ENCODE measurements at regions of chr14 and their contacts with region 1.

Region 1: DNA sequence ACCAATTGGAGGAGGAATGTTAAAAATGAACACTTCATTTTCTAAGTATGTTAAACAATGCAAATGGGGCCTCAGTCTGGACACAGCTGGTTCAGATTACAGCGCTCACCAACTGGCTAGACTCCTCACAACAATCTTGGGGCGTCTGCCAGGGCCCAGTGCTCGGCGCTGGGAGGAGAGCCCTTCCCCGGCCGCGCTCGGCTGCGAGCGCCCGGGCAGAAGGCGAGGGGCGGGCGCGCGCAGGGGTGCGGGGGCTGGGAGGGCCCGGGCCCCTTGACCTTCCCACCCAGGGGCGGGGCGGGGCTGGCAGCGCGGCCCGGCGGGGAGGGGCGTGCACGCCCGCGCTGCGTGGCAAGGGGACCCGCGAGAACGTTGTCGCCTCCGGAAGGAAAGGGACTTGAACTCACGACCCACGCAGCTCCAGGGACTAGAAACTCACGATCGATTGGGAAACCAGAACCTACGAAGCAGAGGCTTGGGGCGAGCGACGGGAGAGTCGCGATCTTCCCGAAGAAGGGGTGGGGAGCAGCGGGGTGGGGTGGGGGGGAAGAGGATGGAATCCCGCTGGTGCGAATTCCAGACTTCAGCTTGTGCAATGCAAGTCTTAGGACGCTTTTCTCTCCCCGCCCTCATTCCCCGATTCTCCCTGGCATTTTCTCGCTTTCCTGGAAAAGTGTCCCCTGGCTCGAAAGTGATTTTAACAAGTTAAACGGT is at the start of gene FBLN5:
- DNase-seq: peak; percentile 83 to 89
- ATAC-seq: peak; percentile 88
- H3K4me3 ChIP-seq: peak within 1 kb of the TSS; percentile 100
- H3K27ac ChIP-seq: peak within 1 kb of the TSS; percentile 71 to 98
- H3K4me1 ChIP-seq: peaks cover 0 to 2% of the 10 kb centered on the region in 2 donors
- H3K27me3 ChIP-seq: no peaks in the 10 kb centered on the region
- total RNA-seq, gene FBLN5: 407 to 431 TPM

Region 2: DNA sequence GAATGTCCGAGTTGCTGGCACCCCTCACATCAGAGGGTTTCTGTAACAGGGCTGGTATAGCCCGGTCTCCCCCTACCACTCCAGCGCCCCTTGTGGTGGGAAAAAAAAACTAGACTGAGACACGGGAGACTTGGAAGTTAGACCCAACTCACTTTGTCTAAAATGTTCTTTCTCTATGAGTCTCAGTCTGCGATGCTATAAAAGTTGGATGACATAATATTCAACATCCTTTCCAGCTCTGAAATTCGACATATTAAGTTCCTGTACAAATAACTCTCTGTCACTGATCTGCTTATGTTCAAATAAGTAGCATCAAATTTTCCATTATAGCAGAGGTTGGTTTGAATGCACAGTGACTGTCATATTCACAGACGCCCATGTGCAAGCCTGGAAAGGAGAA is 54.6 kb before region 1 on chr14:
- intact Hi-C with region 1: loop called in 1 of 2 experiments (anchors 2 kb)
- DNase-seq: no peak
- ATAC-seq: no peak
- H3K4me3 ChIP-seq: no peak overlapping the region
- H3K27ac ChIP-seq: peak overlapping the region; percentile 91 to 97
- H3K4me1 ChIP-seq: peaks cover 4 to 10% of the 10 kb centered on the region in 2 donors
- H3K27me3 ChIP-seq: no peaks in the 10 kb centered on the region

Region 3: DNA sequence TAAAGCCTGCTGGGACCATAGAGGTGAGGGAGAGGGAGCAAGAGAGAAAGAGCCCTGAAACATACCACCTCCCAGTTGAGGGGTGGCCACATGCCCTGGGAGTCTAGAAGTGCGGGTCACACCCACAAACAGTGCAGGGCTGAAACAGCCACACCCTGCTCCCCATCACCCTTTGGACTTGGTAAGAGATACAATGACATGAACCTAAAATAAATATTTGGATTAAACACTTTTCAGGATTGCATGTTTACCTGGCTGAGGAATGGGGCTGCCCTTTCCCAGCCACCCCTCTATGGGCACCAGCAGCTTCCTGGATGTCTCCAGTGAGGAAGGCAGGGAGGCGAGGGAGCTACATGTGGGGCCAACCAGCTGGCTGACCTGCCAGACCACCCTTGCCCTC is 41.3 kb before region 1 on chr14:
- intact Hi-C with region 1: no loop called
- DNase-seq: no peak
- ATAC-seq: no peak
- H3K4me3 ChIP-seq: no peak overlapping the region
- H3K27ac ChIP-seq: peak overlapping the region in 1 of 2 donors; percentile 53
- H3K4me1 ChIP-seq: peaks cover 5 to 18% of the 10 kb centered on the region in 2 donors
- H3K27me3 ChIP-seq: no peaks in the 10 kb centered on the region

Region 4: GRCh38 chr14:91980127-91980741 is 32.6 kb after region 1 on chr14:
- intact Hi-C with region 1: loop called in 1 of 2 experiments (anchors 5 kb)
- DNase-seq: no peak
- ATAC-seq: peak; percentile 64
- H3K4me3 ChIP-seq: no peak overlapping the region
- H3K27ac ChIP-seq: no peak overlapping the region
- H3K4me1 ChIP-seq: peaks cover 0 to 12% of the 10 kb centered on the region in 2 donors
- H3K27me3 ChIP-seq: no peaks in the 10 kb centered on the region

Region 5: DNA sequence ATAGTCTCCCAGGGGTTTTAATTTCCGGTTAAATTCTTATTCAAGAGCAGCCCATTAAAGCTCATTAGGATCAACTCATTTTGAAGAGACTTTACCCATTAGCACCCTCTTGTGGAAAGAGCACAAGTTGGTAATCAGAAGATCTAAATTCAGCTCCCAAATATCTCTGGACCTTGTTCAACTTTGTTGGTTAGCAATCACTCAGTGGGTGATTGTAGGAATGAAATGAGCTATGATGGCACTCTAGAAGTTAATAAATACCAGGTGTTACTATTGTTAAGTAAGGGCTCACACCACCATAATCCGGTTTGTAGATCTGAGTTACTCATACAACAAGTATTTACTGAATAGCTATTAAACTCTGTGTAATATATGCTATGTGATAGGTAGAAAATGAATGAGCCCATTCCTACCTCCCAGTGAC is 49.3 kb after region 1 on chr14:
- intact Hi-C with region 1: loop called in 1 of 2 experiments (anchors 5 kb)
- DNase-seq: no peak
- ATAC-seq: peak; percentile 79
- H3K4me3 ChIP-seq: no peak overlapping the region
- H3K27ac ChIP-seq: no peak overlapping the region
- H3K4me1 ChIP-seq: no peaks in the 10 kb centered on the region
- H3K27me3 ChIP-seq: no peaks in the 10 kb centered on the region